PC-9 (cell line): ENCODE measurements at regions of chr11 and their contacts with region 1.

Region 1: GRCh38 chr11:10091314-10092045 is 202.5 kb downstream of the SBF2 start:
- DNase-seq: no peak
- H3K4me3 ChIP-seq: no peak overlapping the region
- H3K27ac ChIP-seq: no peak overlapping the region
- H3K4me1 ChIP-seq: no peaks in the 10 kb centered on the region
- H3K27me3 ChIP-seq: no peaks in the 10 kb centered on the region
- CTCF ChIP-seq: no peak

Region 2: DNA sequence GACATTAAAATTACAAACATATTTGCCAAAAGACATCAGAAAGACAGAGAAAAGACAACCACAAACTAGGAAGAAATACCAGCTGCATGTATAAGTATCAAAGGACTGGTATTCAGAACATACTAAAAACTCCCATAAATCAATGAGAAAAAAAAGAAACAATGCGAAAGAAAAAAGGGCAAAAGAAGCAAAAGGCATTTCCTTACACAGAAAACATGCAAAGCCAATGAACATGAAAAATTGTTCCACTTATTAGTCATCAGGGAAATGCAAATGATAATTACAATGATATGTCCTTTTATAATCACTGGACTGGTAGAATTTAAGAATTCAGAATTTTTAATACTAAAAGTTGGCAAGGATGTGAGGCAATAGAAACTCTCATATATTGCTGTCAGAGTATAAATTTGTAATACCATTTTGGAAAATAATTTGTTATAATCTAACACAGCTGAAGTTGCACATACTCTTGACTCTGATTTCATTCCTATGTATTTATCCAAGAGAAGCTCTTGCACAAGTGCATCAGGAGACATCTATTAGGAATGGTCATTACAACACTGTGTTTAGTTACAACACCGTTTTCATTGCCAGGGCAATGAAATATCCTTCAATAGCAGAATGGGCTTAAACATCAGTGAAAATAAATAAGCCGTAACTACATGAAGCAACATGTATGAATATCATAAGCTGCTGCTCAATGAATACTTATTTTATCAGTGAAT is 147.9 kb before region 1 on chr11:
- CTCF ChIA-PET with region 1: no interaction called
- POLR2A ChIA-PET with region 1: no interaction called
- intact Hi-C with region 1: no loop called
- DNase-seq: peak in 1 of 2 experiments; percentile 62
- H3K4me3 ChIP-seq: no peak overlapping the region
- H3K27ac ChIP-seq: no peak overlapping the region
- H3K4me1 ChIP-seq: peaks cover 9% of the 10 kb centered on the region; the same call in 1 of the 2 replicates
- H3K27me3 ChIP-seq: no peaks in the 10 kb centered on the region
- CTCF ChIP-seq: no peak

Region 3: GRCh38 chr11:10122326-10123197 is 31.1 kb after region 1 on chr11:
- CTCF ChIA-PET with region 1: no interaction called
- POLR2A ChIA-PET with region 1: interaction called, 18 read pairs
- intact Hi-C with region 1: no loop called
- DNase-seq: peak; percentile 28 to 83
- H3K4me3 ChIP-seq: no peak overlapping the region
- H3K27ac ChIP-seq: peak overlapping the region; percentile 71
- H3K4me1 ChIP-seq: peaks cover 17% of the 10 kb centered on the region
- H3K27me3 ChIP-seq: no peaks in the 10 kb centered on the region
- CTCF ChIP-seq: no peak